ENCODE measurements at regions of chr1 and their contacts with region 1.

Region 1: GRCh38 chr1:219812491-219813203 is 115.7 kb downstream of the SLC30A10 start:
- DNase-seq: no peak
- ATAC-seq: peak; percentile 45
- H3K4me3 Mint-ChIP-seq: no peak overlapping the region
- H3K27ac Mint-ChIP-seq: no peak overlapping the region
- H3K4me1 Mint-ChIP-seq: no peaks in the 10 kb centered on the region
- H3K27me3 Mint-ChIP-seq: peaks cover 10% of the 10 kb centered on the region
- CTCF ChIP-seq: no peak

Region 2: GRCh38 chr1:218259800-218260199 is 1552.8 kb before region 1 on chr1:
- CTCF ChIA-PET with region 1: interaction called, 5 read pairs
- POLR2A ChIA-PET with region 1: no interaction called
- intact Hi-C with region 1: loop called (anchors 5 kb)
- DNase-seq: no peak
- ATAC-seq: no peak
- H3K4me3 Mint-ChIP-seq: no peak overlapping the region
- H3K27ac Mint-ChIP-seq: no peak overlapping the region
- H3K4me1 Mint-ChIP-seq: no peaks in the 10 kb centered on the region
- H3K27me3 Mint-ChIP-seq: peaks cover 4% of the 10 kb centered on the region
- CTCF ChIP-seq: no peak

Region 3: GRCh38 chr1:219159946-219160645 is 652.6 kb before region 1 on chr1:
- CTCF ChIA-PET with region 1: no interaction called
- POLR2A ChIA-PET with region 1: no interaction called
- intact Hi-C with region 1: no loop called
- DNase-seq: no peak
- ATAC-seq: no peak
- H3K4me3 Mint-ChIP-seq: no peak overlapping the region
- H3K27ac Mint-ChIP-seq: no peak overlapping the region
- H3K4me1 Mint-ChIP-seq: peaks cover 5% of the 10 kb centered on the region
- H3K27me3 Mint-ChIP-seq: no peaks in the 10 kb centered on the region
- CTCF ChIP-seq: no peak

Region 4: DNA sequence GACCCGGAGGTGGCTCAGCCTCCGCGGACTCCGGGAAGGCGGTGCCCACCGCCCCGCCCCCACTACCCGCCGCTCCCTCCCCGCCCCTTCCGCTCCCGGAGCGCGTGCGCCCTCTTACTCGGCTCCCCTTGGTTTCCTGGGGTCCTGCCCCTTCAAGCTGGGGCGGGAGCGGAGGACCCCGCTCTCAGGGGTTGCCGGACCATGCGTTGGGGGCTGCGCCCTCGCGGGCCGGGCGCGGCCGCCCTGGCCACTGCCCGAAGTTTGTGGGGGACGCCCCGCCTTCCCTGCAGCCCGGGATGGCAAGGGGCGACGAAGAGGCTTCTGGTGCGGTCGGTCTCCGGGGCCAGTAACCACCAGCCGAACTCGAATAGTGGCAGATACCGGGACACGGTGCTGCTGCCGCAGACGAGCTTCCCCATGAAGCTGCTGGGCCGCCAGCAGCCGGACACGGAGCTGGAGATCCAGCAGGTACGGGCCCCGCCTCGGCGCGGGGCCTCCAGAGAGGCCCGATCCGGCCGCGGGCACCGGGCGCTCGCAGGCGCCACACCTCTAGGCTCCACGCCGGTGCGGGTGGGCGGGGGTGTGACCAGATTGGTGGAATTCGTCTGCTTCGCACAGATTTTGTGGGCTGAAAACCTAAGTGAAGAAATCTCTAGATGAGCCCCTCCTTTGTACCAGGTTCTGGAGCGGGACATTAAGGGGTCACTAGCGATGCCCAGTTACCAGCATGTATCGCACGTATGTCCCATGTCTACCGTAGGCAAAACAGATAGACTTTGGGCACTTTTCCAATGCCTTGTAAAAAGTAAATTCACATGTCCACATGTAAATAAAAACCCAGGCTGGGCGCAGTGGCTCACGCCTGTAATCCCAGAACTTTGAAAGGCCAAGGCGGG is 281.6 kb after region 1 on chr1 and contains the start of gene IARS2:
- CTCF ChIA-PET with region 1: no interaction called
- POLR2A ChIA-PET with region 1: no interaction called
- intact Hi-C with region 1: no loop called
- DNase-seq: peak; percentile 85
- ATAC-seq: peak; percentile 77
- H3K4me3 Mint-ChIP-seq: peak within 1 kb of the TSS; percentile 84
- H3K27ac Mint-ChIP-seq: peak within 1 kb of the TSS; percentile 53
- H3K4me1 Mint-ChIP-seq: peaks cover 30% of the 10 kb centered on the region
- H3K27me3 Mint-ChIP-seq: no peaks in the 10 kb centered on the region
- CTCF ChIP-seq: no peak
- total RNA-seq, gene IARS2: 39.8 and 41.9 TPM in 2 replicates